Transverse colon (tissue), 4 donors: ENCODE measurements at regions of chr7 and their contacts with region 1.

Region 1: DNA sequence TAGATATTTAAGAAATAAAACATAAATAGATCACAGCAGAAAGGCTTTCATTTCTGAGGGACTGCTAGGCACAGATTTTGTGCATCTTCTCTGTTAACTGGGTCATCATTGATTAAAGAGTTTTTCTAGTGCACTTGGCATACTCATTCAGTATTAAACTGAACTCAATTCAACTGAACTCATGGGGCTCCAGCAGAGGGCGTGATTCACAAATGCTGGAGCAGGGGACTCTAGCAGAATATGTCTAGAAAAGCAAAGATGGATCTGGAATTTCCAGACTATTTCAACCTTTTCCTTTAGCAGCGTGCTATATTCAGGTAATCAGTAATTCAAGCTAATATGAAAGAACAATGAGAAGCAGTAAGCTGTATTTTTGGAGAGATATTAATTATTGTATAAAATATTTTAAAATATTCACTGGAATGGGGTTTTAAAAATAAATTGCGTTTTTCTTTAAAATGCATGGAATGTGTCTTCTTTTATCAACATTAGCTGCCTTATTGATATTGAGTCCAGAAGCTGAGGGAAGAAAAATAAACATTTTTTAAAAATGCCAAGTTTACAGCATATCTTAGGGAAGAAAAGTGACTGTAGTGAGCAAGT is 296.8 kb upstream of the CACNA2D1 start:
- DNase-seq: peak; percentile 19
- H3K4me3 ChIP-seq: no peak overlapping the region
- H3K27ac ChIP-seq: no peak overlapping the region
- H3K4me1 ChIP-seq: no peaks in the 10 kb centered on the region
- H3K27me3 ChIP-seq: no peaks in the 10 kb centered on the region
- CTCF ChIP-seq: peak in 3 of 5 experiments; percentile 10 to 32 (median 29)
- EP300 ChIP-seq: no peak
- POLR2A ChIP-seq: no peak

Region 2: GRCh38 chr7:81355911-81356310 is 1384.4 kb before region 1 on chr7:
- in situ Hi-C with region 1: no loop called
- intact Hi-C with region 1: no loop called
- DNase-seq: no peak
- H3K4me3 ChIP-seq: no peak overlapping the region
- H3K27ac ChIP-seq: no peak overlapping the region
- H3K4me1 ChIP-seq: no peaks in the 10 kb centered on the region
- H3K27me3 ChIP-seq: no peaks in the 10 kb centered on the region
- CTCF ChIP-seq: no peak
- EP300 ChIP-seq: no peak
- POLR2A ChIP-seq: no peak

Region 3: GRCh38 chr7:82044497-82045080 is 695.8 kb before region 1 on chr7:
- in situ Hi-C with region 1: loop called in 3 of 4 experiments (anchors 10 to 25 kb)
- intact Hi-C with region 1: no loop called
- DNase-seq: peak; percentile 14
- H3K4me3 ChIP-seq: no peak overlapping the region
- H3K27ac ChIP-seq: no peak overlapping the region
- H3K4me1 ChIP-seq: peaks cover 0 to 5% (median 0%) of the 10 kb centered on the region in 4 donors
- H3K27me3 ChIP-seq: no peaks in the 10 kb centered on the region
- CTCF ChIP-seq: peak; percentile 56 to 76 (median 61)
- EP300 ChIP-seq: no peak
- POLR2A ChIP-seq: no peak

Region 4: GRCh38 chr7:82234457-82235049 is 505.8 kb before region 1 on chr7:
- in situ Hi-C with region 1: loop called in 1 of 4 experiments (anchors 25 kb)
- intact Hi-C with region 1: no loop called
- DNase-seq: no peak
- H3K4me3 ChIP-seq: no peak overlapping the region
- H3K27ac ChIP-seq: no peak overlapping the region
- H3K4me1 ChIP-seq: no peaks in the 10 kb centered on the region
- H3K27me3 ChIP-seq: no peaks in the 10 kb centered on the region
- CTCF ChIP-seq: peak; percentile 33 to 61 (median 52)
- EP300 ChIP-seq: no peak
- POLR2A ChIP-seq: no peak

Region 5: DNA sequence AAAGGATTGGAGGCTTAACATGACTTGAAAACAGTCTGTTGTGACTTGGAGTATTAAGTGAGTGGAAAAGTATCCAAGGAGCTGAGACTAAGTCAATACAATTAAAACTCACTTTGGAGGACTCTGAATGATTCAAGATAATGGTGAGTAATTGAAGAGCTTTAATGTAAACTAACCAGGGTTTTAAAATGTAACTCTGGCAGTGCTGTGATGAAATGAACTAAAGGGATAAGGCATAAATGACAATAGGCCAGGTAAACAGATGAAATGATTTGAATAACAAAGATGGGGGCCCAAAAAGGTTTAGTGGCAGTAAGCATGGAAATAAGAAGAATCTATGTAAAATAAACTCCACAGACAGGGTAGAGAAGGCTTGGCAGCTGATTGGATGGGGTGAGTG is 19.7 kb after region 1 on chr7:
- in situ Hi-C with region 1: no loop called
- intact Hi-C with region 1: no loop called
- DNase-seq: no peak
- H3K4me3 ChIP-seq: no peak overlapping the region
- H3K27ac ChIP-seq: no peak overlapping the region
- H3K4me1 ChIP-seq: no peaks in the 10 kb centered on the region
- H3K27me3 ChIP-seq: no peaks in the 10 kb centered on the region
- CTCF ChIP-seq: no peak
- EP300 ChIP-seq: no peak
- POLR2A ChIP-seq: no peak